ENCODE measurements at regions of chr17 and their contacts with region 1.

Region 1: GRCh38 chr17:45098869-45099616 is 33.3 kb downstream of the PLCD3 start:
- DNase-seq: peak; percentile 85 to 99
- ATAC-seq: peak; percentile 87 to 92
- H3K4me3 ChIP-seq: no peak overlapping the region
- H3K27ac ChIP-seq: no peak overlapping the region
- H3K4me1 ChIP-seq: peaks cover 11% of the 10 kb centered on the region
- CTCF ChIP-seq: peak; percentile 98
- EP300 ChIP-seq: no peak
- POLR2A ChIP-seq: no peak
- RAD21 ChIP-seq: peak; percentile 84 to 87

Region 2: DNA sequence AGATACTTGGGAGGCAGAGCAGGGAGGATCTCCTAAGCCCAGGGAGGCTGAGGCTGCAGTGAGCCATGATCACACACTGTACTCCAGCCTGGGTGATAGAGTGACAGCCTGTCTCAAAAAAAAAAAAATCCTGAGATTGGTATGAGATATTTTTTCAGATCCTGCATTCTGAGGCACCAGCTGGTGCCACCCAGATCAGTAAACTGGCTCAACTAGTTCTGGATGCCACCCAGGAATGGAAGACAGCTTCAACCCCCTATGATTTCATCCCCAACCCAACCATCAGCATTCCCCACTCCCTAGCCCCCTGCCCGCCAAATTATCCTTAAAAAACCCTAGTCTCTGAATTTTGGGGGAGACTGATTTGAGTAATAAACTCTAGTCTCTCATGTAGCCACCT is 261.8 kb before region 1 on chr17:
- CTCF ChIA-PET with region 1: no interaction called
- POLR2A ChIA-PET with region 1: no interaction called
- DNase-seq: no peak
- ATAC-seq: peak; percentile 11 to 21; a peak in 3 of 6 replicates
- H3K4me3 ChIP-seq: no peak overlapping the region
- H3K27ac ChIP-seq: no peak overlapping the region
- H3K4me1 ChIP-seq: no peaks in the 10 kb centered on the region
- CTCF ChIP-seq: no peak
- EP300 ChIP-seq: no peak
- POLR2A ChIP-seq: no peak
- RAD21 ChIP-seq: no peak

Region 3: DNA sequence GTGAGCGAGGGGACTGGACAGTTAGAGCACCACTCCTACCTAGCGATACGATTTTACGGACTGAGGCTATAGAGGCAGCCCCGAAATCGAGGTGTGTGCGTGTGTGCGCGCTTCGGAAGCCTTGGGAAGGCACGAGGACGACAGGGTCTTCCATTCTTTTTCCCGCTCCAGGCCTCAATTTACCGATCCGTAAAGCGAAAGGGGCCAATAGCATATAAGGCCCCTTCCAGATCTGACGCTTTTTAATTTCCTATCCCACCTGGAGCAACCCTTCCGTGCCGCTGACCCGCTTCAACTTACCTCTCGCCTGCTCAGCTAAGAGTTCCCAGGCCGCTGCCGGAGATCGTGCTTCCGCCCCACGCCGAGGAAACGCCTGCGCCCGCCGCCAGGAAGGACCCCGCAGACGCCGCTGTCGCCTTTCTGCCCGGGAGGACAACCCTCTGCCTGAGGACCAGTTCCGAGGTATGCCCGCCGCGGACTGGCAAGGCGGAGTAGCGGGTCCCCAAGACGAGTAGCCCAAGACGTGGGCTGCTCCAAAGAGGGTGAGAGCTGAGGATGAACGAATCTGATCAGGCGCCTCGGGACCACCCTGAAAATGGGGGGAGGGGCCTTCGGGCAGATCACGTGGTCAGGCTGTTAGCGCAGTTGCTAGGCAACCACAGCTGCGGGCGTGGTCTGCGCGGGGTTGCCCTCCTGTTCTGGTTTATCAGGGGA is 199.8 kb before region 1 on chr17 and contains the start of gene EFTUD2:
- CTCF ChIA-PET with region 1: interaction called, 14 read pairs
- POLR2A ChIA-PET with region 1: no interaction called
- DNase-seq: peak; percentile 94 to 96
- ATAC-seq: peak; percentile 83 to 85
- H3K4me3 ChIP-seq: peak within 1 kb of the TSS; percentile 65
- H3K27ac ChIP-seq: peak within 1 kb of the TSS; percentile 87 to 96
- H3K4me1 ChIP-seq: peaks cover 37% of the 10 kb centered on the region
- CTCF ChIP-seq: no peak
- EP300 ChIP-seq: peak in 1 of 2 experiments; percentile 25; a peak in 1 of 5 replicates
- POLR2A ChIP-seq: peak; percentile 85
- RAD21 ChIP-seq: peak in 1 of 2 experiments; percentile 18; a peak in 2 of 5 replicates
- polyA plus RNA-seq, gene EFTUD2: 254 and 353 TPM in 2 replicates

Region 4: GRCh38 chr17:44919885-44920564 is 179.0 kb before region 1 on chr17:
- CTCF ChIA-PET with region 1: interaction called, 104 read pairs
- POLR2A ChIA-PET with region 1: no interaction called
- DNase-seq: peak; percentile 89 to 97
- ATAC-seq: peak; percentile 85 to 90
- H3K4me3 ChIP-seq: no peak overlapping the region
- H3K27ac ChIP-seq: peak overlapping the region; percentile 14 to 80; a peak in 4 of 6 replicates
- H3K4me1 ChIP-seq: peaks cover 23% of the 10 kb centered on the region
- CTCF ChIP-seq: peak; percentile 98
- EP300 ChIP-seq: no peak
- POLR2A ChIP-seq: no peak
- RAD21 ChIP-seq: peak; percentile 99

Region 5: GRCh38 chr17:45051060-45051719 is 47.9 kb before region 1 on chr17 and contains the start of gene DCAKD:
- CTCF ChIA-PET with region 1: interaction called, 44 read pairs
- POLR2A ChIA-PET with region 1: interaction called, 8 read pairs
- DNase-seq: peak; percentile 93 to 97
- ATAC-seq: peak; percentile 97 to 99
- H3K4me3 ChIP-seq: peak within 1 kb of the TSS; percentile 54
- H3K27ac ChIP-seq: peak within 1 kb of the TSS; percentile 91 to 95
- H3K4me1 ChIP-seq: peaks cover 35% of the 10 kb centered on the region
- CTCF ChIP-seq: no peak
- EP300 ChIP-seq: no peak
- POLR2A ChIP-seq: peak; percentile 75
- RAD21 ChIP-seq: no peak
- polyA plus RNA-seq, gene DCAKD: 21.4 and 26.2 TPM in 2 replicates

Region 6: GRCh38 chr17:45073414-45074070 is 25.5 kb before region 1 on chr17:
- CTCF ChIA-PET with region 1: interaction called, 145 read pairs
- POLR2A ChIA-PET with region 1: no interaction called
- DNase-seq: no peak
- ATAC-seq: no peak
- H3K4me3 ChIP-seq: no peak overlapping the region
- H3K27ac ChIP-seq: peak overlapping the region; percentile 32 to 62; a peak in 4 of 6 replicates
- H3K4me1 ChIP-seq: peaks cover 12% of the 10 kb centered on the region; the same call in 2 of the 3 replicates
- CTCF ChIP-seq: no peak
- EP300 ChIP-seq: no peak
- POLR2A ChIP-seq: no peak
- RAD21 ChIP-seq: no peak

Region 7: GRCh38 chr17:45087504-45087975 is 11.5 kb before region 1 on chr17:
- CTCF ChIA-PET with region 1: interaction called, 96 read pairs
- POLR2A ChIA-PET with region 1: no interaction called
- DNase-seq: no peak
- ATAC-seq: no peak
- H3K4me3 ChIP-seq: no peak overlapping the region
- H3K27ac ChIP-seq: no peak overlapping the region
- H3K4me1 ChIP-seq: peaks cover 26% of the 10 kb centered on the region
- CTCF ChIP-seq: no peak
- EP300 ChIP-seq: no peak
- POLR2A ChIP-seq: no peak
- RAD21 ChIP-seq: no peak

Region 8: GRCh38 chr17:45115871-45116724 is 17.1 kb after region 1 on chr17:
- CTCF ChIA-PET with region 1: interaction called, 161 read pairs
- POLR2A ChIA-PET with region 1: no interaction called
- DNase-seq: no peak
- ATAC-seq: no peak
- H3K4me3 ChIP-seq: no peak overlapping the region
- H3K27ac ChIP-seq: peak overlapping the region in 1 of 2 experiments; percentile 37; a peak in 2 of 6 replicates
- H3K4me1 ChIP-seq: 0 out of 3 replicates have a peak, but pooled peaks cover 3% of the 10 kb centered on the region
- CTCF ChIP-seq: no peak
- EP300 ChIP-seq: no peak
- POLR2A ChIP-seq: no peak
- RAD21 ChIP-seq: no peak

Region 9: DNA sequence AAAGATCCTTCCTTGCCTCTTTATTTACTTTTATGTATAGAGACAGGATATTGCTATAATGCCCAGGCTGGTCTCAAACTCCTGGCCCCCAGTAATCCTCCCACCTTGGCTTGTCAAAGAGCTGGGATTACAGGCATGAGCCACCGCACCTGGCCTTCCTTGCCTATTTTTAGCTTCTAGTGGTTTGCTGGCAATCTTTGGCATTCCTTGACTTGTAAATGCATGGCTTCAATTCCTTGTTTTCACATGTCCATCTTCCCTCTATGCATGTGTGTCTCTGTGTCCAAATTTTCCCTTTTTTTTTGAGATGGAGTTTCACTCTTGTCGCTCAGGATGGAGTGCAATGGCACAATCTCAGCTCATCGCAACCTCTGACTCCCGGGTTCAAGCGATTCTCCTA is 85.1 kb after region 1 on chr17:
- CTCF ChIA-PET with region 1: no interaction called
- POLR2A ChIA-PET with region 1: no interaction called
- DNase-seq: no peak
- ATAC-seq: no peak
- H3K4me3 ChIP-seq: no peak overlapping the region
- H3K27ac ChIP-seq: peak overlapping the region; percentile 60 to 79
- H3K4me1 ChIP-seq: peaks cover 23% of the 10 kb centered on the region
- CTCF ChIP-seq: no peak
- EP300 ChIP-seq: no peak
- POLR2A ChIP-seq: no peak
- RAD21 ChIP-seq: no peak

Measured in A549 (cell line).